ENCODE measurements at regions of chr10 and their contacts with region 1.

Region 1: DNA sequence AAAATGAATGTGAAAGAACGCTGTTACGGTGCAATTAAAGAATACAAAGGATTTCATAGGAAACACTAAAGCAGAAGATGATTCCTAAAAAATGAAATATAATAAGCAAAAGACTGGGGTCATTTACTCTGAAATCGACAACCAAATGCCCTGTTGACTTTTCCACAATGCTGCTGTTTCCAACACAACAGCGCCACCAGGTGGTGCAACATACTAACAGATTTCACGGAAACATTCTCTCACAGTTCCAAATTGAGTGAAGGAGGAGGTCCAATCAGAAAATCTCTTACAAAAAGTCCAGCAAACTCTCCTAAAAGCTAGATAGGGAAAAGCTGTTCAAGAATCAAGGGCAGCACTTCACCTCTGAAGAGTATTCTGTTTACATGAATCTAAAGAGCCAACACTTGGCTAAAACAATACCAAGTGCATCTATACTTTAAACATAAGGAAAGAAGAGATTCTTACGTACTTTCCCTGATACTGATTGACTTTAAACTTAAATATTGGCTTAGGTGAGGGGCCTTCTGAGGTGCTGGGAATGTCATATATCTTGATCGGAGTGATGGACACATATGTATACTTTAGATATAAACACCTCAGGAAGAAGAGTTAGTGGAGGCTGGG is 55.9 kb downstream of the UPF2 start:
- DNase-seq: peak; percentile 51 to 65 (median 57)
- H3K4me3 ChIP-seq: no peak overlapping the region
- H3K4me3 Mint-ChIP-seq: no peak overlapping the region
- H3K27ac ChIP-seq: no peak overlapping the region
- H3K27ac Mint-ChIP-seq: peak overlapping the region in 1 of 7 donors; percentile 19
- H3K4me1 ChIP-seq: peaks cover 5% of the 10 kb centered on the region
- H3K4me1 Mint-ChIP-seq: peaks cover 5 to 12% (median 7%) of the 10 kb centered on the region in 4 donors
- H3K27me3 ChIP-seq: no peaks in the 10 kb centered on the region
- H3K27me3 Mint-ChIP-seq: no peaks in the 10 kb centered on the region

Region 2: GRCh38 chr10:11782793-11783557 is 203.7 kb before region 1 on chr10:
- CTCF ChIA-PET with region 1: interaction called, 39 read pairs
- POLR2A ChIA-PET with region 1: no interaction called
- intact Hi-C with region 1: no loop called
- DNase-seq: peak in 4 of 5 donors; percentile 16 to 49 (median 42)
- H3K4me3 ChIP-seq: no peak overlapping the region
- H3K4me3 Mint-ChIP-seq: no peak overlapping the region
- H3K27ac ChIP-seq: no peak overlapping the region
- H3K27ac Mint-ChIP-seq: peak overlapping the region in 1 of 7 donors; percentile 1
- H3K4me1 ChIP-seq: no peaks in the 10 kb centered on the region
- H3K4me1 Mint-ChIP-seq: peaks cover 0 to 2% (median 0%) of the 10 kb centered on the region in 4 donors
- H3K27me3 ChIP-seq: no peaks in the 10 kb centered on the region
- H3K27me3 Mint-ChIP-seq: peaks cover 1 to 9% of the 10 kb centered on the region in 2 donors

Region 3: GRCh38 chr10:11863353-11864109 is 123.2 kb before region 1 on chr10:
- CTCF ChIA-PET with region 1: no interaction called
- POLR2A ChIA-PET with region 1: no interaction called
- intact Hi-C with region 1: no loop called
- DNase-seq: peak; percentile 49 to 77 (median 62)
- H3K4me3 ChIP-seq: peak overlapping the region; percentile 2 to 40
- H3K4me3 Mint-ChIP-seq: peak overlapping the region; percentile 65 to 88 (median 82)
- H3K27ac ChIP-seq: peak overlapping the region; percentile 50
- H3K27ac Mint-ChIP-seq: peak overlapping the region; percentile 87 to 98 (median 92)
- H3K4me1 ChIP-seq: peaks cover 23% of the 10 kb centered on the region
- H3K4me1 Mint-ChIP-seq: peaks cover 17 to 49% (median 24%) of the 10 kb centered on the region in 4 donors
- H3K27me3 ChIP-seq: no peaks in the 10 kb centered on the region
- H3K27me3 Mint-ChIP-seq: peaks cover 2 to 4% of the 10 kb centered on the region in 2 donors

Region 4: DNA sequence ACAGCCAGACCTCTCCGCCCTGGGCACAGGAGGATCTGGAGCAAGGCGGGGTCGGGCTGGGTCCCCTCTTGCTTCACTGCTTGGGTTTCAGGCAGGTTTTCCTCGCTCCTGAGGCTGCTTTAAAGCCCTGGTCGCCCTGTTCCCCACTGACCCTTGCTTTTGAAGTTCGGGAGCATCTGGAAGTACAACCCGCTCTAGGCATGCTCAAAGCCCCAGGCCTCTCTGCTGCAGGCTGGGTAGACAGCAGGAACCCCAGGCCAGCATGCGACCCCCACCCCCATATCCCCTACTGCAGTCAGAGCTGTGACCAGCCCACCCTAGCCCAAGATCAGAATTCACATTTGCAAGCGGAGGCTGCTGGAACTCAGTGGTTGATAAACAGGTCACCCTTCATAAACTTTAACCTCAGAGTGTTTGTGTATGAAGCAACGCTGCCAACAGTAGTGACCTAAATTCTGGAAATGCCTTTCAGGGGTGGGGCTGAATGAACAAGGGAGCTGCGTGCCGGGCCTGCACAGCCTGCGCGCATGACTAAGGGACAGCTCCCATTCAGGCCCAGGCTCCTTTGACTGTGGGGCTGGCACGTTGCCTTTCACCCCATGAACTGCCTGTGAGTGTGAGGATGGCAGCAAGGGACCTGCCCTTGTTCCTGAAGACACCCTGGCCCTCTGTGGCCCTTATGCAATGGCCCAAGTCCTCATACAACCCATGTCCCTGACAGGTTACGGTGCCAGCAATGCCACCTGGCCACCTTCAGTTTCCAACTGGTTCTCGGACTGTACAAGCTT is 111.0 kb before region 1 on chr10:
- CTCF ChIA-PET with region 1: no interaction called
- POLR2A ChIA-PET with region 1: no interaction called
- intact Hi-C with region 1: no loop called
- DNase-seq: peak in 2 of 5 donors; percentile 13 to 26
- H3K4me3 ChIP-seq: no peak overlapping the region
- H3K4me3 Mint-ChIP-seq: no peak overlapping the region
- H3K27ac ChIP-seq: no peak overlapping the region
- H3K27ac Mint-ChIP-seq: peak overlapping the region in 1 of 7 donors; percentile 79
- H3K4me1 ChIP-seq: peaks cover 24% of the 10 kb centered on the region
- H3K4me1 Mint-ChIP-seq: peaks cover 9 to 35% (median 17%) of the 10 kb centered on the region in 4 donors
- H3K27me3 ChIP-seq: no peaks in the 10 kb centered on the region
- H3K27me3 Mint-ChIP-seq: peaks cover 0 to 4% of the 10 kb centered on the region in 2 donors

Region 5: DNA sequence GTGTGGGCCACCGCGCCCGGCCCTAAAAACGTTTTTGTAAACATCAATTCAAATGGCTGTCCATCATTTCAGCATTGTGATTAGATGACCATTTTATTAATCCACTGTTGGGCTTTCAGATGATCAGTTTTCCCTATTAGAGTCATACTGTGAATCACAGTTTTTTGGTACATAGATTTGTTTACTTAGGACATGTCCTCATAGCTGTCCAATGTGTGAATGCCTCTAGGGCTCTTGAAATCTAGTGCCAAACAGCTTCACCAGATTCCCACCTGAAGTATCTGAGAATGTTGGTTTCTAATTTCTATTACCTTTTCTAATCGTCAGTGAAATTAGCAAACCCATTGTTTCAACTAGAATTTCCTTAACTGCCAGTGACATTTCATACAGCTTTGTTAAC is 10.9 kb before region 1 on chr10:
- CTCF ChIA-PET with region 1: interaction called, 14 read pairs
- POLR2A ChIA-PET with region 1: no interaction called
- intact Hi-C with region 1: no loop called
- DNase-seq: no peak
- H3K4me3 ChIP-seq: no peak overlapping the region
- H3K4me3 Mint-ChIP-seq: no peak overlapping the region
- H3K27ac ChIP-seq: no peak overlapping the region
- H3K27ac Mint-ChIP-seq: no peak overlapping the region
- H3K4me1 ChIP-seq: no peaks in the 10 kb centered on the region
- H3K4me1 Mint-ChIP-seq: peaks cover 0 to 5% (median under 1%) of the 10 kb centered on the region in 4 donors
- H3K27me3 ChIP-seq: no peaks in the 10 kb centered on the region
- H3K27me3 Mint-ChIP-seq: no peaks in the 10 kb centered on the region

Region 6: GRCh38 chr10:12006671-12007070 is 20.0 kb after region 1 on chr10:
- CTCF ChIA-PET with region 1: interaction called, 12 read pairs
- POLR2A ChIA-PET with region 1: no interaction called
- intact Hi-C with region 1: no loop called
- DNase-seq: no peak
- H3K4me3 ChIP-seq: no peak overlapping the region
- H3K4me3 Mint-ChIP-seq: no peak overlapping the region
- H3K27ac ChIP-seq: no peak overlapping the region
- H3K27ac Mint-ChIP-seq: peak overlapping the region in 3 of 7 donors; percentile 6 to 75 (median 44)
- H3K4me1 ChIP-seq: no peaks in the 10 kb centered on the region
- H3K4me1 Mint-ChIP-seq: peaks cover 0 to 11% (median 5%) of the 10 kb centered on the region in 4 donors
- H3K27me3 ChIP-seq: no peaks in the 10 kb centered on the region
- H3K27me3 Mint-ChIP-seq: no peaks in the 10 kb centered on the region

Region 7: DNA sequence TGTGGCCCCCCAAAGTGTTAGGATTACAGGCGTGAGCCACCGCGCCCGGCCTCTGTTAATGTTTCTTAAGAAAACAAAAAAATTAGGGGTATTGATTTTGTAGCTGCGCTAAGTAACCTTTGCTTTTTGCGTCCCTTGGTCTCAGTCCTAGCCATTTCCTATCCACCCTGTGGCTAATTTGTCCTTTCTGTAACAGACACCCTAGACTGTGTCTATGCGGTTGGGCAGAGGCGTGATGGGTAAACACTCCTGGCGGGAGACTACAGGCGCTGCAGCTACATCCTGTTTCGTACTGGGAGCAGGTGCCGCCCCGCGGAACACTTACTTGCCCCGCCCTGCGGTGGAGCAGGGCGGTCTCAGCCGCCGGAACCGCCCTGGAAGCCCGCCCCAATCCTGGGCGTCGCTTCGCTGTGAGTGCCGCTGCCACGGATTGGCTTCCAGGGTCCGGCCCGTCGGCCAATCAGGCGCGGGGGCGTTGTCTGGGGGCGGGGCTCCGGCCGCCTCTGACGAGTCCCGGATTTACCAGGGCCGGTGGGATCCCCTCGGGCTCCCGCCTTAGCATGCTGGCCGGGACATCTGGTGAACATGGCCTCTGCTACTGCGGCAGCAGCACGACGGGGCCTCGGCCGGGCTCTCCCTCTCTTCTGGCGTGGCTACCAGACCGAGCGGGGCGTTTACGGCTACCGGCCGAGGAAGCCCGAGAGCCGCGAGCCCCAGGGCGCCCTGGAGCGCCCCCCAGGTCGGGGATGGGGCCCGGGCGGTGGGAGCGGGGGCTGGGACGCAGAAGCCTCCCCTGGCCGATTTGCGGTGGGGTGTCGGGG is 82.0 kb after region 1 on chr10 and contains the start of gene DHTKD1:
- CTCF ChIA-PET with region 1: no interaction called
- POLR2A ChIA-PET with region 1: no interaction called
- intact Hi-C with region 1: loop called (anchors 1 kb)
- DNase-seq: peak; percentile 97 to 98 (median 97)
- H3K4me3 ChIP-seq: peak within 1 kb of the TSS; percentile 52 to 83
- H3K4me3 Mint-ChIP-seq: peak within 1 kb of the TSS; percentile 85 to 93 (median 89)
- H3K27ac ChIP-seq: peak within 1 kb of the TSS; percentile 83
- H3K27ac Mint-ChIP-seq: peak within 1 kb of the TSS; percentile 70 to 97 (median 96)
- H3K4me1 ChIP-seq: peaks cover 16% of the 10 kb centered on the region
- H3K4me1 Mint-ChIP-seq: peaks cover 11 to 24% (median 18%) of the 10 kb centered on the region in 4 donors
- H3K27me3 ChIP-seq: no peaks in the 10 kb centered on the region
- H3K27me3 Mint-ChIP-seq: peaks cover 0 to 2% of the 10 kb centered on the region in 2 donors
- total RNA-seq, gene DHTKD1: 15.7 to 16.5 TPM